ENCODE measurements at regions of chr4 and their contacts with region 1.

Region 1: GRCh38 chr4:2761035-2761923 is 5.1 kb upstream of the TNIP2 start:
- DNase-seq: no peak
- H3K4me3 Mint-ChIP-seq: no peak overlapping the region
- H3K27ac Mint-ChIP-seq: no peak overlapping the region
- H3K4me1 Mint-ChIP-seq: peaks cover 13% of the 10 kb centered on the region
- H3K27me3 Mint-ChIP-seq: no peaks in the 10 kb centered on the region

Region 2: GRCh38 chr4:2787230-2788088 is 26.2 kb after region 1 on chr4:
- intact Hi-C with region 1: loop called (anchors 1 kb)
- DNase-seq: peak; percentile 32
- H3K4me3 Mint-ChIP-seq: peak overlapping the region; percentile 56
- H3K27ac Mint-ChIP-seq: peak overlapping the region; percentile 92
- H3K4me1 Mint-ChIP-seq: peaks cover 49% of the 10 kb centered on the region
- H3K27me3 Mint-ChIP-seq: no peaks in the 10 kb centered on the region

Region 3: GRCh38 chr4:2811830-2812611 is 50.7 kb after region 1 on chr4:
- intact Hi-C with region 1: loop called (anchors 1 kb)
- DNase-seq: peak; percentile 54
- H3K4me3 Mint-ChIP-seq: peak overlapping the region; percentile 94
- H3K27ac Mint-ChIP-seq: peak overlapping the region; percentile 96
- H3K4me1 Mint-ChIP-seq: peaks cover 60% of the 10 kb centered on the region
- H3K27me3 Mint-ChIP-seq: no peaks in the 10 kb centered on the region

Region 4: DNA sequence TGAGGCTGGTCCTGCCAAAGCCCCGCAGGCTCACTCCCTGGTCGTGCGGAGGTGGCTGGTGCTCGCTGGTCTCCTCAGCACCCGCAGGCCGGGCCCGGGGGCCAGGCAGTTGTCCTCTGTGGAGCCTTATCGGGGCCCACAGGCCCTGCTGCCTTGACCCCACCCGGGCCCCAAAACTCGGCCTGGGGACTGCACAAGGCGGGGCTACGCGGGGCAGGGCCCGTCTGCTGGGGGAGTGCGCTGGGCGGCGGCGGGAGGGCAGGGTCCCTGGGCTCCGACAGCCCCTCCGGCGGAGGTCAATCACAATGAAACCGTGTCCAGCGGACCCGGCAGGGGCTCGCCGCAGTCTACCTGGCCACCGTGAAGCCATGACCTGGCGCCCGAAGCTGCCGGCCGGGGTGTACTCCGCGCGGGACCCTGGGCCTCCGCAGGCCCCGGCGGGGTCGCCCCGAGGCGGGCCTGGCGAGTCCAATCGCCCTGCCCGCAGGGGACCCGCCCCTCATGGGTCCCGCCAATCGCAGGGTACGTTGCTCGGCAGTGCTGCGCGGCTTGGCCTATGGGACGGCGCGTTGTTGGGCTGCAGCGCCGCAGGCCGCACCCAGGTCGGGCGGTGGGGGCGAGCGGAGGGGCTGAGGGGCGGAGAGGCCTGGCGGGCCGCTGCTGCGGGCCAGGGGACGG is 82.1 kb after region 1 on chr4 and contains the start of gene ADD1:
- intact Hi-C with region 1: loop called (anchors 1 kb)
- DNase-seq: peak; percentile 97
- H3K4me3 Mint-ChIP-seq: peak within 1 kb of the TSS; percentile 95
- H3K27ac Mint-ChIP-seq: peak within 1 kb of the TSS; percentile 92
- H3K4me1 Mint-ChIP-seq: peaks cover 49% of the 10 kb centered on the region
- H3K27me3 Mint-ChIP-seq: no peaks in the 10 kb centered on the region
- total RNA-seq, gene ADD1: 200 and 203 TPM in 2 replicates

Region 5: DNA sequence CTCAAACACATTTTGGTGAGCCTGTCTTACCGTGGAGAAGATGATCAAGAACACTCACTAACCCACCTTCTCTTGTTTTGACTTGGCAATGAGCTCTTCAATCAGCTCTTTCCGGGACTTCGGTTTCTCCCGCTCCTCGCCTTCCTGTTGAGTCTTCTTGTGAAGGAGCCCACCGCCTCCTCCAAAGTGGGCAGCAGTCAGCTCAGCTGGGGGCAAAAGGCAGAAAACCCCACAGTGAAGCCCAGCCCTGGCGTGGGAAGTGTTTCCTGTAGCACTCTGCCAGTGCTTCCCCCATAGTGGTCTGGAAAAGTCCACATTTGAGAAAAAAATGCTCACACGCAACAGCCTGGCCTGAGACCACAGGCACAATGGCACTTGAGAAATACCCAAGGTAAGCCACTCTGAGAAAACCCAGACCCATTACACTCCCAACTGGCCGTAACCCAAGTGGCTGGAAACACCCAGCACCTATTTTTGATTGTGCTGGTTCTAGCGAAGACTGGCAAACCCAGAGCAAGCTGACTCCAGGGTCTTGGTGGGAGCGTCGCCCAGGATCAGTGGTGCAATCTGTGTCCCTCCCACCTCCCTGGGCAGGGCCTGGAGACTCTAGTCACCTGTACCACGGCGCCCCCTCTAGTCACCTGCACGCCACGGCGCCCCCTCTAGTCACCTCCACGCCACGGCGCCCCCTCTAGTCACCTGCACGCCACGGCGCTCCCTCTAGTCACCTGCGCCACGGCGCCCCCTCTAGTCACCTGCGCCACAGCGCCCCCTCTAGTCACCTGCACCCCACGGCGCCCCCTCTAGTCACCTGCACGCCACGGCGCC is 193.3 kb after region 1 on chr4:
- intact Hi-C with region 1: loop called (anchors 1 kb)
- DNase-seq: peak; percentile 64
- H3K4me3 Mint-ChIP-seq: peak overlapping the region; percentile 80
- H3K27ac Mint-ChIP-seq: peak overlapping the region; percentile 98
- H3K4me1 Mint-ChIP-seq: peaks cover 72% of the 10 kb centered on the region
- H3K27me3 Mint-ChIP-seq: no peaks in the 10 kb centered on the region

Measured in activated T-helper 1 cell treated with anti-CD3 and anti-CD28 coated beads, Interleukin-12 subunit alpha, Interleukin-12 subunit beta, Interleukin-2, Interleukin-4 antibody, amounts not matched to agents 30 ng/mL and 10 ng/mL and 1 ng/mL, durations not matched to agents 14 hours and 24 hours and 36 hours (primary cell).